Calu3 (cell line): ENCODE measurements at regions of chr6 and their contacts with region 1.

Region 1: GRCh38 chr6:163956571-163957407 is 542.3 kb downstream of the QKI start:
- DNase-seq: peak; percentile 76
- H3K4me3 Mint-ChIP-seq: no peak overlapping the region
- H3K27ac Mint-ChIP-seq: no peak overlapping the region
- H3K4me1 Mint-ChIP-seq: no peaks in the 10 kb centered on the region
- H3K27me3 Mint-ChIP-seq: no peaks in the 10 kb centered on the region
- CTCF ChIP-seq: peak; percentile 86

Region 2: DNA sequence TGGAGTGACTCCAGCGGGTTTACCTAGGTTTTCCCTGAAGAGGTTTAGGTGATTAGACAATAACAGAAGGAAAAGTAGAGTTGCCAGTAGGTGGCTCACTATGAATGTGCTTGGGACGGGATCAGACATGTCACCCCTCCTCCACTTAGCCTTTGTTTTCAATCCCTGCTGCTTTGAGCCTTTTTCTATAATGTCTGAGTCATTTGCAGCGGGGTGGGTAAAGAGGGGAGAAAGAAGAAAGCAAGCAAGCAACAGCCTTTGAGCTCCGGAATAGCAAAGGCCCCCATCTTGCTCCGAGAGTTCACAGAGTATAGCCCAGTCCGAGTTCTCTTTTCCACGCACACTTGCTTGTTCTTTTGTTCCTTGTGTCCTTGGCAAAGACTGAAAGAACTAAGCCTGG is 1099.9 kb before region 1 on chr6:
- CTCF ChIA-PET with region 1: no interaction called
- intact Hi-C with region 1: loop called (anchors 5 kb)
- DNase-seq: peak; percentile 59
- H3K4me3 Mint-ChIP-seq: peak overlapping the region; percentile 57
- H3K27ac Mint-ChIP-seq: peak overlapping the region; percentile 44
- H3K4me1 Mint-ChIP-seq: peaks cover 7% of the 10 kb centered on the region
- H3K27me3 Mint-ChIP-seq: no peaks in the 10 kb centered on the region
- CTCF ChIP-seq: peak; percentile 50

Region 3: GRCh38 chr6:163419413-163420288 is 537.1 kb before region 1 on chr6:
- CTCF ChIA-PET with region 1: interaction called, 3 read pairs
- intact Hi-C with region 1: loop called (anchors 2 kb)
- DNase-seq: no peak
- H3K4me3 Mint-ChIP-seq: peak overlapping the region; percentile 83
- H3K27ac Mint-ChIP-seq: peak overlapping the region; percentile 95
- H3K4me1 Mint-ChIP-seq: peaks cover 31% of the 10 kb centered on the region
- H3K27me3 Mint-ChIP-seq: no peaks in the 10 kb centered on the region
- CTCF ChIP-seq: no peak

Region 4: GRCh38 chr6:163572612-163573011 is 384.2 kb before region 1 on chr6:
- CTCF ChIA-PET with region 1: no interaction called
- intact Hi-C with region 1: loop called (anchors 5 kb)
- DNase-seq: peak; percentile 34
- H3K4me3 Mint-ChIP-seq: peak overlapping the region; percentile 7
- H3K27ac Mint-ChIP-seq: peak overlapping the region; percentile 82
- H3K4me1 Mint-ChIP-seq: peaks cover 31% of the 10 kb centered on the region
- H3K27me3 Mint-ChIP-seq: no peaks in the 10 kb centered on the region
- CTCF ChIP-seq: no peak

Region 5: GRCh38 chr6:163904186-163904585 is 52.6 kb before region 1 on chr6:
- CTCF ChIA-PET with region 1: no interaction called
- intact Hi-C with region 1: no loop called
- DNase-seq: no peak
- H3K4me3 Mint-ChIP-seq: no peak overlapping the region
- H3K27ac Mint-ChIP-seq: no peak overlapping the region
- H3K4me1 Mint-ChIP-seq: no peaks in the 10 kb centered on the region
- H3K27me3 Mint-ChIP-seq: peaks cover 10% of the 10 kb centered on the region
- CTCF ChIP-seq: no peak

Region 6: DNA sequence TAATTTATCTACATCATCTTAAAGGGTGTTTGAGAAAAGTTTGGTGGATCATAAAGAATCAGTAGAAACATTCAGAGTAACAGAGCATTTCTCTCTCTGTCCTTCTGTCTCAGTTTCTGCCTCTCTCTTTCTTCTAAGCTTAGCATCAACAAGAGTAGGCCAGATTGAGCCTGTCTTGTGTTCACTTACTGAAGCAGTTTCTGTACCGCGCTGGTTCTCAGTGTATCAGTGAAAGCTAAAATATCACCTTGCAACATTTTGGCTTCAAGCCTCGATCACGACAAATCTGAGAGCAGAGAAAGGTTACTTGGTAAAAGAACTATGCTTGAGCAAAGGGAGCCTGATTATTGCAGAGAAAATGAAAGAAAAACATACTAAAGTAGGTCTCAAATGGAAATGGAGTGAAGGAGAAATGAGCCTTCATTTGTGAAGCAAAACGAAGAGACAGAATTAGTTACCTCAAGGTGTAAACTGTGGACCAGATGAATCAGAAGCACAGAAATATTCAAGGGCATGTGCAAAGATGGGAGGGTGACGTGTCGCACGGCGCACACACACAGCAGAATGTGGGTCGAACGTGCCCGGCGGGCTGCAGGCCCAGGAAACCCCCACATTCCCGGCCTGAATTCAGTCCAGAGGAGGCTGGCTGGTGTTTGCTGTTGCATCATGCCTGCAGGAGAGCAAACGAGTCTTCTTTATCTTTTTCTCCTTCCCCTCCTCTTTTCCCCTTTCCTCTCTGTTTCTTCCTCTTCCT is 33.0 kb before region 1 on chr6:
- CTCF ChIA-PET with region 1: no interaction called
- intact Hi-C with region 1: no loop called
- DNase-seq: no peak
- H3K4me3 Mint-ChIP-seq: no peak overlapping the region
- H3K27ac Mint-ChIP-seq: no peak overlapping the region
- H3K4me1 Mint-ChIP-seq: no peaks in the 10 kb centered on the region
- H3K27me3 Mint-ChIP-seq: peaks cover 9% of the 10 kb centered on the region
- CTCF ChIP-seq: no peak

Region 7: DNA sequence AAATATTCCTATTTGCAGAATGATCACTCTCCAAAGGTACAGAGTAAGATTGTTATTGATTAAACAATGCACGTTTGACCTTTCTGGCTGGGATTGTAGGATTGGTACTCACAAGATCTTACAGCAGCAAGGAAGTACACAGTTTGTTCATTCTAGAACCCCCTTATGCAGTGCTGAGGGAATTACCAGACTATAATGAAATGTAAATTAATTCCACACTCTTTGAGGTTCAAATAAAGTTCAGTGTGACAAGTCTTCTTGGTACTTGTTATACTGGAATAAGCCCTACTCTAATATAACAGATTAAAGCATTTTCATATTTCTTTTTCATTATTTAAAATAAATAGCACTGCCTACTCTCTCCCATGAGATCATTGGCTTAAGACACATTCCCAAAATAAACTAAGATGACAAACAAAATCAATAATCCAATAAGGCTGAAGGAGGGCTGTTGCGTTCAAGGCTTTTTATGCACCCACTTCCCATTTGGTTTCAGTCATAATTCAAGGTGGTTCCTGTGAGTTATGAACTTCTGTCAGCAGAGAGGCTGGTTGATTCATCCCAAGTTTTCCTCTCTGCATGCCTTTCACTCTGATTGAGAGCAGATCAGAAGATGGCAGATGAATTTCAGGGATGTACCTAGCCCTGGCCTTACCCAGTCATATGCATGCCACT is 471.1 kb after region 1 on chr6:
- CTCF ChIA-PET with region 1: no interaction called
- intact Hi-C with region 1: no loop called
- DNase-seq: no peak
- H3K4me3 Mint-ChIP-seq: no peak overlapping the region
- H3K27ac Mint-ChIP-seq: no peak overlapping the region
- H3K4me1 Mint-ChIP-seq: no peaks in the 10 kb centered on the region
- H3K27me3 Mint-ChIP-seq: no peaks in the 10 kb centered on the region
- CTCF ChIP-seq: no peak

Region 8: GRCh38 chr6:164927288-164928056 is 970.7 kb after region 1 on chr6:
- CTCF ChIA-PET with region 1: no interaction called
- intact Hi-C with region 1: loop called (anchors 5 kb)
- DNase-seq: peak; percentile 79
- H3K4me3 Mint-ChIP-seq: no peak overlapping the region
- H3K27ac Mint-ChIP-seq: no peak overlapping the region
- H3K4me1 Mint-ChIP-seq: no peaks in the 10 kb centered on the region
- H3K27me3 Mint-ChIP-seq: no peaks in the 10 kb centered on the region
- CTCF ChIP-seq: peak; percentile 91